ENCODE measurements at regions of chr7 and their contacts with region 1.

Region 1: DNA sequence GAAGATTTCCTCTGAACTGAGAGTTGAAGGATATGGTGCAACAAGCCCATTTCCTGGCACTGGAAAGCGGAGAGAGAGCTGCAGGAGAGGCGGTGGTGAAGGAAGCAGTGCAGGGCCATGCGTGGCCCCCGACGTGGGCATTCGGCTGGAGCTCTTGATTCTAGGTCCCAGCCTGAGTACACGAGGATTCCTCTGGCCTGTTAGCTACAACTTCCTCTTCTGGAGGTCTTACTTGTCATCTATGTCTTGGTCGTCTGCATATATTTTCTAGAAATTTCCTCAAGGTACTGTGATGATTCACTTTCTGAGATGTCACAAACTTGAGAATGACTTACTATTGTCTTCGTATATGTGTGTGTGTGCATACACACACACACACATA is 59.2 kb upstream of the JAZF1 start:
- DNase-seq: no peak
- H3K4me3 Mint-ChIP-seq: no peak overlapping the region
- H3K27ac Mint-ChIP-seq: no peak overlapping the region
- H3K4me1 Mint-ChIP-seq: peaks cover 9% of the 10 kb centered on the region
- H3K27me3 Mint-ChIP-seq: peaks cover 64% of the 10 kb centered on the region

Region 2: DNA sequence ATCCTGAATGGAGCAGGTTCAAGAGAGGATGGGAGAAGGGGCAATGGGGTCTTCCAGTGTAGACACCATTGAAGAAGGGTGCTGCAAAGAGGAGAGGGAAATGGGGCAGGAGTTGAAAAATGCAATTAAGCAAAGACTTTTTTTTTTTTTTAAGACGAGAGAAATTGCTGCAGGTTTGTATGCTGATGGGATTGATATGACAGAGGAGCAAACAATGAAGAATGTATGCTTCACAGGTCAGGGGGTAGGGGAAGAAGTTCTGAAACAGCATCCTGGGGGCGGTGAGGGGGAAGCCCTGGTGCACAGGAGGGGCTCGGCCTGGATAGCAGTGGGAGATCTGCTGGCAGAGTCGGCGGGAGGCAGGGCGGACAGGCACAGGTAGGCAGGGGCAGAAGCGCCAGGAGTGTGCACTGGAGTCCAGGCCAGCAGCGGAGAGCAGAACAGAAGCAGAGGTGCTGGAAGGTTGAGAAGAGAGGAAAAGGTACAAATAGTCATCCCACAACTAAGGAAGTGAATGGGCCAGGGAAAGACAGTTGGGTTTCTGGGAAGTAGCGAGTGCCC is 1772.8 kb before region 1 on chr7:
- intact Hi-C with region 1: no loop called
- DNase-seq: no peak
- H3K4me3 Mint-ChIP-seq: no peak overlapping the region
- H3K27ac Mint-ChIP-seq: no peak overlapping the region
- H3K4me1 Mint-ChIP-seq: no peaks in the 10 kb centered on the region
- H3K27me3 Mint-ChIP-seq: peaks cover 4% of the 10 kb centered on the region

Region 3: DNA sequence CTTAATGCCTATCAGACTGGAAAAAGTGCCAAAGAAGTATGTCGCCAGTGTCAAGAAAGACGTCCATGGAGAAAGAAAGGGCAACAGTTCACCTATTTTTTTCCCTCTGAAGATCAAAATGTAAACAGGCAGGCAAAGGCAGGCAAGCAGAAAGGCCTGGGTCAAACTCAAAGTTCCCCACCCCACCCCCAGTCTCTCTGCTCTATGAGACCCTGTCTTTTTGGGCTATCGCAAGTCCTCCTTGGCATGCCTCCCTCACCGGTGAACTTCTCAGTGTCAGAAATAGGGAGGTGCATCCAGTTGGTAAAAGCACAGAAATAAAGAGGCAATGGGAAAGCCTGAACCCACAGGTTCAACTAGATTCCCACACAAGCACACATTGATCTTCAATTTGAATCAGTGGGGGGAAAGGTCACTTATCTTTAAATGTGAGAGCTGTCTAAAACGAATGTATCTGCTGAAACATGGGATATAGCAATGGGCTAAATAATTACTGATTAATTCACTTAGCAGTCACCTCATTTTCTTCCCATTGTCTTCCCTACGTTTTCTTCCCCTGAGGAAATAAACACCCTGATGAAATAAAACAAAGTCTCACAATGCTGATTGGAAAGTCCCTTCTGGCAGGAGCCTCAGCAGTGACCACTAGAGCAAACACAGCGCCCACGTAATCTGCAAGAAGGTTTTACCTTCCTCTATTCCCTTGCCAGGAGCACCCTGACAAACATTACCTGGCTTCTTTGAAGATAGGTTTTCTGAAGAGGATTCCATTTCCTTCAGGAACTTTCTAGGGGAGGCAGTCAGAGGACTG is 90.3 kb before region 1 on chr7:
- intact Hi-C with region 1: loop called (anchors 1 kb)
- DNase-seq: no peak
- H3K4me3 Mint-ChIP-seq: no peak overlapping the region
- H3K27ac Mint-ChIP-seq: no peak overlapping the region
- H3K4me1 Mint-ChIP-seq: peaks cover 34% of the 10 kb centered on the region
- H3K27me3 Mint-ChIP-seq: peaks cover 13% of the 10 kb centered on the region

Region 4: DNA sequence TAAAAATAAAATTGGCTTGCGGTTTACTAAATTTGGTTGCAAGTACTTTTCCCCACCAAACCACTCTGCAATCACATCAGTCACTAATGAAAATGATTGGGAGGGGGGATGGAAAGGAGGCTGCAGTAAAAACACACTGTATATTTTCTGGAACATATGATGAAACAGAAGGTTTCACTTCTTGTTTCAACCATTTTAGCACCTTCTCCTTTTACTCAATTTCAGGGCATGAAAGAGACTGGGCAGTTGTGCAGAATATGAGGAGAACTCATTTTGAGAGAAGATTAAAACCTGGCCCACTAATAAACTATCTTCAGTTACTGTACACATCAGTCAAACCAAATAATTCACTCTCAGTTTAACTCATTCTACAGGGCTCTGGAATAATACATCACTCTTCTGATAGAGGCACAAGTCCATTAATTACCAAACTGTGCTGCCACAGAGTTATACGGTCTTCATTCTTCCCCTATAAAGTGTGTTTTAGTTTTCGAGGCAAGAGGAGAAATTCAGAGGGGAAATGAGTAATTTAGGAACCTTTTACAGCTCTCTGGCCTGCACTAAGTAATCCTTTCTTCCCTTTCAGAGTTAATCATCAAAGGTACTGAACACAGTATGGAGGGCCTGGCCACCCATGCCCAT is 84.7 kb before region 1 on chr7:
- intact Hi-C with region 1: loop called (anchors 1 kb)
- DNase-seq: no peak
- H3K4me3 Mint-ChIP-seq: no peak overlapping the region
- H3K27ac Mint-ChIP-seq: peak overlapping the region; percentile 60
- H3K4me1 Mint-ChIP-seq: peaks cover 47% of the 10 kb centered on the region
- H3K27me3 Mint-ChIP-seq: peaks cover 26% of the 10 kb centered on the region

Region 5: GRCh38 chr7:28207486-28208158 is 32.2 kb before region 1 on chr7:
- intact Hi-C with region 1: loop called (anchors 1 kb)
- DNase-seq: no peak
- H3K4me3 Mint-ChIP-seq: no peak overlapping the region
- H3K27ac Mint-ChIP-seq: no peak overlapping the region
- H3K4me1 Mint-ChIP-seq: peaks cover 20% of the 10 kb centered on the region
- H3K27me3 Mint-ChIP-seq: peaks cover 10% of the 10 kb centered on the region

Region 6: GRCh38 chr7:28292834-28293526 is 53.2 kb after region 1 on chr7:
- intact Hi-C with region 1: loop called (anchors 2 kb)
- DNase-seq: no peak
- H3K4me3 Mint-ChIP-seq: no peak overlapping the region
- H3K27ac Mint-ChIP-seq: no peak overlapping the region
- H3K4me1 Mint-ChIP-seq: peaks cover 10% of the 10 kb centered on the region
- H3K27me3 Mint-ChIP-seq: peaks cover 46% of the 10 kb centered on the region

Region 7: GRCh38 chr7:28573059-28573553 is 333.3 kb after region 1 on chr7:
- intact Hi-C with region 1: no loop called
- DNase-seq: no peak
- H3K4me3 Mint-ChIP-seq: no peak overlapping the region
- H3K27ac Mint-ChIP-seq: no peak overlapping the region
- H3K4me1 Mint-ChIP-seq: no peaks in the 10 kb centered on the region
- H3K27me3 Mint-ChIP-seq: peaks cover 6% of the 10 kb centered on the region